Activated CD4-positive, alpha-beta memory T cell treated with anti-CD3 and anti-CD28 coated beads for 36 hours (primary cell): ENCODE measurements at regions of chr15 and their contacts with region 1.

Region 1: GRCh38 chr15:92903941-92904831 is 4.1 kb downstream of the CHD2 start:
- DNase-seq: peak; percentile 100
- H3K4me3 Mint-ChIP-seq: peak overlapping the region; percentile 97
- H3K27ac Mint-ChIP-seq: peak overlapping the region; percentile 100
- H3K4me1 Mint-ChIP-seq: peaks cover 55% of the 10 kb centered on the region
- H3K27me3 Mint-ChIP-seq: peaks cover 3% of the 10 kb centered on the region

Region 2: DNA sequence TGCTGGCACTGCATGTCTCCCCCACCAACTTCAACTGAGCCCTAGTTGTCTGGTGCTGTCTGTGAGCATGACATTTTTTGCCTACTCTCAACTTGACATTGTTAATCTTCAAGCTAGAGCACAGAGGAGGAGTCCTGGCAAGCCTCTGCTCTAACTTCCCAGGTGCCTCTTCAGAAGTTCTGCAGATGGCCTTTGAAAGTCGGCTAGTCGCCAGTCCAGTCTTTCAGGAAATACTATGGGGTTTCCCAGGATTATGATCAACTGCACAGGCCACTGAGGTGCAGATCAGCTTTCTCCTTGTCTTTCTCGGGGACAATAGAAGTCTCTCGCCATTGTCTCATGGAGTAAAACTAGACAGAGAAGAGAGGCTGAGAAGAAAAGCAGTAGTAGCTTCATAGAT is 423.8 kb before region 1 on chr15:
- CTCF ChIA-PET with region 1: no interaction called
- POLR2A ChIA-PET with region 1: no interaction called
- intact Hi-C with region 1: no loop called
- DNase-seq: no peak
- H3K4me3 Mint-ChIP-seq: no peak overlapping the region
- H3K27ac Mint-ChIP-seq: no peak overlapping the region
- H3K4me1 Mint-ChIP-seq: no peaks in the 10 kb centered on the region
- H3K27me3 Mint-ChIP-seq: peaks cover 13% of the 10 kb centered on the region

Region 3: DNA sequence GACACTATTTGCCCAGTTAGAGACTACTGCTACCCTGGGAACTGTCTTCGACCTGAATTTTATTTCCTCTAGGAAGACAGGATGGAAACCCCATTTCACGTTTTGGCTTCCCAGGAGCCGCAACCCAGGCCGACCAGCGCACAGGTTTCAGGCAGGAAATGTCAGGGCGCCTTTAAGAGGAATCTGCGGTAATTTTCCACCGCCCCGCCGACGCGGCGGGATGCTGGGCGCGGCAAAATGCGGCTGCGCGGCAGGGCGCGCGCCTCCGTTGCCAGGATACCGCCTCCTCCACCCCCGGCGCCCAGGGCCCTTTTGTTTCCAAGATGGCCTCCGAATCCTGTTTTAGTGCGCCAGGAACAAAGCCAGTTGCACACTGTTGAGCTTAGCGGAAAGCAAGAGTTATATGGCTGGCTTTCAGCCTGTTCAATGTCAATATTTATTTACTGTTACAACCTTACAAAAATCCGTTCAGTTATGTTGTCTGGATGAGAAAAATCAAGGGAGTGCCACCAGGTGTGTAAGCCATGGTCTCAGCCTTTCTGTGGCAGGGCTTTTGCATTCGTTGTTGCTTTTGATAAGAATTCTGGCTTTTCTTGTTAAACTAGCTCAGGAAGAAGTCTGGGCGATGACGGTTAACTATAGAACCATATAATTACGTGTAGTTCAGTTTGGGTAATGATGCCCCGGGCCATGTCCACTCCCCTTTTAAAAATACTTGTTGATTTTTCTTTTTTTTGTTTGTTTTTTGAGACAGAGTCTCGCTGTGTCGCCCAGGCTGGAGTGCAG is 83.8 kb before region 1 on chr15:
- CTCF ChIA-PET with region 1: interaction called, 4 read pairs
- POLR2A ChIA-PET with region 1: interaction called, 26 read pairs
- intact Hi-C with region 1: no loop called
- DNase-seq: peak; percentile 92
- H3K4me3 Mint-ChIP-seq: peak overlapping the region; percentile 83
- H3K27ac Mint-ChIP-seq: peak overlapping the region; percentile 83
- H3K4me1 Mint-ChIP-seq: peaks cover 59% of the 10 kb centered on the region
- H3K27me3 Mint-ChIP-seq: no peaks in the 10 kb centered on the region

Region 4: DNA sequence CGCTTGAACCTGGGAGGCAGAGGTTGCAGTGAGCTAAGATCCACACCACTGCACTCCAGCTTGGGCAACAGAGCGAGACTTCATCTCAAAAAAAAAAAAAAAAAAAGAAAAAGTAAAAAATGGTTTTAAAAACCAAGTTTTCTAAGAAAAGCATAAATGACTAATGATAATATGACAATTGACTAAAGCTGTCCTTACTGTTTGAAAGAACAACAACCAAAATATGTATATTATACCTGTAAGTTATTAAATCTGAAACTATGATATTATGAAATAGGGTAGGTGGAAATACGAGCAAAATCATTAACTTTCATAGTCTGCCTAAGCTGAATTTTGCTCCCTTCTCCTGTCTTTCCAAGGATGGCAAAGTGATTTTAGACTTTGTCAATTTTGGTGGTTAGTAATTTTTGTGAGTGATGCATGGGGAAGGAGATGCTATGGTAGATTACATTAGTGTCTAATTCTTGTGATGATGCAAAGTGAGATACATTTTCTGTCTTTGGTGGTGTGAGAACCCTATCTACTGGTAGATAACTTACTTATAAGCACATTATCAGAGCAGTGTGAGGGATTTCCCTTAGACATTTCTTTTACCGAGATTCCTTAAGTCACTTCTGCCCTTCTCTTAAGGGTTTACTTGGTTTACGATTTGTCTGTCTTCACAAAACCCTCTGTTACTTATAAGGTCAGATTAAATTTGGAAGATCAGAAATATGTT is 14.6 kb before region 1 on chr15:
- CTCF ChIA-PET with region 1: interaction called, 69 read pairs
- POLR2A ChIA-PET with region 1: interaction called, 733 read pairs
- intact Hi-C with region 1: loop called (anchors 1 kb)
- DNase-seq: no peak
- H3K4me3 Mint-ChIP-seq: peak overlapping the region; percentile 61
- H3K27ac Mint-ChIP-seq: peak overlapping the region; percentile 86
- H3K4me1 Mint-ChIP-seq: peaks cover 66% of the 10 kb centered on the region
- H3K27me3 Mint-ChIP-seq: no peaks in the 10 kb centered on the region